Activated B cell treated with CpG ODN at 0.5 μM for 24 hours (primary cell): ENCODE measurements at regions of chr19 and their contacts with region 1.

Region 1: GRCh38 chr19:41785653-41786052 is 10.7 kb upstream of the CEACAM3 start:
- DNase-seq: peak; percentile 36
- ATAC-seq: peak; percentile 92
- H3K4me3 Mint-ChIP-seq: peak overlapping the region; percentile 61
- H3K27ac Mint-ChIP-seq: no peak overlapping the region
- H3K4me1 Mint-ChIP-seq: peaks cover 24% of the 10 kb centered on the region
- H3K27me3 Mint-ChIP-seq: peaks cover 16% of the 10 kb centered on the region
- CTCF ChIP-seq: no peak

Region 2: DNA sequence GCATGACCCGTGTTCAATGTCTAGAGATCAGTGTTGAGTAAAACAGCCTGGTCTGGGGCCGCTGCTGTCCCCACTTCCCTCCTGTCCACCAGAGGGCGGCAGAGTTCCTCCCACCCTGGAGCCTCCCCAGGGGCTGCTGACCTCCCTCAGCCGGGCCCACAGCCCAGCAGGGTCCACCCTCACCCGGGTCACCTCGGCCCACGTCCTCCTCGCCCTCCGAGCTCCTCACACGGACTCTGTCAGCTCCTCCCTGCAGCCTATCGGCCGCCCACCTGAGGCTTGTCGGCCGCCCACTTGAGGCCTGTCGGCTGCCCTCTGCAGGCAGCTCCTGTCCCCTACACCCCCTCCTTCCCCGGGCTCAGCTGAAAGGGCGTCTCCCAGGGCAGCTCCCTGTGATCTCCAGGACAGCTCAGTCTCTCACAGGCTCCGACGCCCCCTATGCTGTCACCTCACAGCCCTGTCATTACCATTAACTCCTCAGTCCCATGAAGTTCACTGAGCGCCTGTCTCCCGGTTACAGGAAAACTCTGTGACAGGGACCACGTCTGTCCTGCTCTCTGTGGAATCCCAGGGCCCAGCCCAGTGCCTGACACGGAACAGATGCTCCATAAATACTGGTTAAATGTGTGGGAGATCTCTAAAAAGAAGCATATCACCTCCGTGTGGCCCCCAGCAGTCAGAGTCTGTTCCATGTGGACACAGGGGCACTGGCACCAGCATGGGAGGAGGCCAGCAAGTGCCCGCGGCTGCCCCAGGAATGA is 78.7 kb before region 1 on chr19:
- CTCF ChIA-PET with region 1: interaction called, 4 read pairs
- POLR2A ChIA-PET with region 1: no interaction called
- intact Hi-C with region 1: loop called (anchors 1 kb)
- DNase-seq: peak; percentile 60
- ATAC-seq: peak; percentile 88
- H3K4me3 Mint-ChIP-seq: peak overlapping the region; percentile 76
- H3K27ac Mint-ChIP-seq: no peak overlapping the region
- H3K4me1 Mint-ChIP-seq: peaks cover 4% of the 10 kb centered on the region
- H3K27me3 Mint-ChIP-seq: peaks cover 45% of the 10 kb centered on the region
- CTCF ChIP-seq: peak; percentile 99

Region 3: GRCh38 chr19:41726493-41726892 is 59.2 kb before region 1 on chr19:
- CTCF ChIA-PET with region 1: no interaction called
- POLR2A ChIA-PET with region 1: no interaction called
- intact Hi-C with region 1: no loop called
- DNase-seq: no peak
- ATAC-seq: no peak
- H3K4me3 Mint-ChIP-seq: no peak overlapping the region
- H3K27ac Mint-ChIP-seq: no peak overlapping the region
- H3K4me1 Mint-ChIP-seq: no peaks in the 10 kb centered on the region
- H3K27me3 Mint-ChIP-seq: peaks cover 23% of the 10 kb centered on the region
- CTCF ChIP-seq: no peak

Region 4: GRCh38 chr19:41746593-41747227 is 38.9 kb before region 1 on chr19:
- CTCF ChIA-PET with region 1: interaction called, 61 read pairs
- POLR2A ChIA-PET with region 1: interaction called, 10 read pairs
- intact Hi-C with region 1: no loop called
- DNase-seq: no peak
- ATAC-seq: peak; percentile 47
- H3K4me3 Mint-ChIP-seq: no peak overlapping the region
- H3K27ac Mint-ChIP-seq: no peak overlapping the region
- H3K4me1 Mint-ChIP-seq: peaks cover 17% of the 10 kb centered on the region
- H3K27me3 Mint-ChIP-seq: peaks cover 35% of the 10 kb centered on the region
- CTCF ChIP-seq: no peak

Region 5: DNA sequence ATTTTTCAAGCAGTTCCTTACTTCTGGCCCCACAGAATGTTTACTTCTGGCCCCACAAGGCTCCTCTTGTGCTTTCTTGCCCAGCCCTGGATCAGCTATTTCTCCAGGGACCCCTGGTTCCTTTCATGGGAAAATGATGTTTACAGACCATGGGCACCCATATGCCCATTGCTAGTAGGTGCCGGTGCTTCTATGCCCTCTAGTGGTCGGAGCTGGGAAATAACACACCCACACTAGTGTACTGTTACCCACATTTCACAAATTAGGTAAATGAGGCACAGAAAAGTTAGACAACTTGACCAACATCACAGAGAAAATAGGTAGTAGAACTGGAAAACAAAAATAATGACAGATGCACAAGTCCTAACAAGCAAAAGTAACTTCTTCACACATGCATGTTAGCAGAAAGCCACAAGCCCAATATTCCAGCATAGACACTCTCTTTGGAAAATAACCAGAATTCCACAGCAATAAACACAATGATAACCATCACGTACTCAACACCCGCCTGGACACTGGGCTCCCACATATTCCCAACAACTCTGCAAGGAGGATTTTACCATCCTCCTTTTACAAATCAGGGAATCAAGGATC is 31.6 kb before region 1 on chr19:
- CTCF ChIA-PET with region 1: interaction called, 61 read pairs
- POLR2A ChIA-PET with region 1: no interaction called
- intact Hi-C with region 1: loop called (anchors 1 kb)
- DNase-seq: peak; percentile 35
- ATAC-seq: peak; percentile 90
- H3K4me3 Mint-ChIP-seq: no peak overlapping the region
- H3K27ac Mint-ChIP-seq: no peak overlapping the region
- H3K4me1 Mint-ChIP-seq: peaks cover 2% of the 10 kb centered on the region
- H3K27me3 Mint-ChIP-seq: peaks cover 13% of the 10 kb centered on the region
- CTCF ChIP-seq: peak; percentile 5

Region 6: DNA sequence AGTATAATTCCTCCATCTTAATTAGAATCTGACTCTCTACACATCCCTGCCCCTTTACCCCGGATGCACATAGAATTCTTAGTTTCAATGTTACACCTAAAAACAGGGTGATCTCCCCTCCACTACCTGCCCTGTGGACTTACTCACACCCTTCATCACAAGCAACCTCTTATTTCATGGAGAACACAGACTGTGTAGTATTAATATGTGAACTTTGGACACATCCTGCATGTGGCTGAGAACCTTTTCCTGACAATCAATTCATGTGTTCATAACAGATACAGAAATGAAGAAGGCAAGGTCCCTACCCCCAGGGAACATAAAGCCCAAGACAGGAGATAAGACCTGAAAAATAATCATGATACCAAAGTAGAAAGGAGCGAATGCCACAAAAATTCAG is 18.5 kb before region 1 on chr19:
- CTCF ChIA-PET with region 1: no interaction called
- POLR2A ChIA-PET with region 1: no interaction called
- intact Hi-C with region 1: no loop called
- DNase-seq: no peak
- ATAC-seq: no peak
- H3K4me3 Mint-ChIP-seq: no peak overlapping the region
- H3K27ac Mint-ChIP-seq: no peak overlapping the region
- H3K4me1 Mint-ChIP-seq: no peaks in the 10 kb centered on the region
- H3K27me3 Mint-ChIP-seq: peaks cover 22% of the 10 kb centered on the region
- CTCF ChIP-seq: no peak